GM18951 (cell line): ENCODE measurements at regions of chr6 and their contacts with region 1.

Region 1: GRCh38 chr6:137878486-137879285 is 11.6 kb downstream of the TNFAIP3 start:
- POLR2A ChIP-seq: no peak

Region 2: GRCh38 chr6:137937834-137938233 is 59.1 kb after region 1 on chr6:
- in situ Hi-C with region 1: loop called (anchors 5 kb)
- POLR2A ChIP-seq: no peak

Region 3: GRCh38 chr6:138109042-138109997 is 230.6 kb after region 1 on chr6:
- in situ Hi-C with region 1: no loop called
- POLR2A ChIP-seq: no peak